Activated CD4-positive, alpha-beta memory T cell treated with anti-CD3 and anti-CD28 coated beads for 36 hours (primary cell): ENCODE measurements at regions of chr14 and their contacts with region 1.

Region 1: DNA sequence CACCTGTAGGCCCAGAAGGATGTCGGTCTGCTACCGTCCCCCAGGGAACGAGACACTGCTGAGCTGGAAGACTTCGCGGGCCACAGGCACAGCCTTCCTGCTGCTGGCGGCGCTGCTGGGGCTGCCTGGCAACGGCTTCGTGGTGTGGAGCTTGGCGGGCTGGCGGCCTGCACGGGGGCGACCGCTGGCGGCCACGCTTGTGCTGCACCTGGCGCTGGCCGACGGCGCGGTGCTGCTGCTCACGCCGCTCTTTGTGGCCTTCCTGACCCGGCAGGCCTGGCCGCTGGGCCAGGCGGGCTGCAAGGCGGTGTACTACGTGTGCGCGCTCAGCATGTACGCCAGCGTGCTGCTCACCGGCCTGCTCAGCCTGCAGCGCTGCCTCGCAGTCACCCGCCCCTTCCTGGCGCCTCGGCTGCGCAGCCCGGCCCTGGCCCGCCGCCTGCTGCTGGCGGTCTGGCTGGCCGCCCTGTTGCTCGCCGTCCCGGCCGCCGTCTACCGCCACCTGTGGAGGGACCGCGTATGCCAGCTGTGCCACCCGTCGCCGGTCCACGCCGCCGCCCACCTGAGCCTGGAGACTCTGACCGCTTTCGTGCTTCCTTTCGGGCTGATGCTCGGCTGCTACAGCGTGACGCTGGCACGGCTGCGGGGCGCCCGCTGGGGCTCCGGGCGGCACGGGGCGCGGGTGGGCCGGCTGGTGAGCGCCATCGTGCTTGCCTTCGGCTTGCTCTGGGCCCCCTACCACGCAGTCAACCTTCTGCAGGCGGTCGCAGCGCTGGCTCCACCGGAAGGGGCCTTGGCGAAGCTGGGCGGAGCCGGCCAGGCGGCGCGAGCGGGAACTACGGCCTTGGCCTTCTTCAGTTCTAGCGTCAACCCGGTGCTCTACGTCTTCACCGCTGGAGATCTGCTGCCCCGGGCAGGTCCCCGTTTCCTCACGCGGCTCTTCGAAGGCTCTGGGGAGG is at the start of gene LTB4R:
- DNase-seq: peak; percentile 81
- H3K4me3 Mint-ChIP-seq: peak within 1 kb of the TSS; percentile 79
- H3K27ac Mint-ChIP-seq: peak within 1 kb of the TSS; percentile 84
- H3K4me1 Mint-ChIP-seq: peaks cover 69% of the 10 kb centered on the region
- H3K27me3 Mint-ChIP-seq: no peaks in the 10 kb centered on the region
- total RNA-seq, gene LTB4R: 15.4 to 16.7 TPM

Region 2: DNA sequence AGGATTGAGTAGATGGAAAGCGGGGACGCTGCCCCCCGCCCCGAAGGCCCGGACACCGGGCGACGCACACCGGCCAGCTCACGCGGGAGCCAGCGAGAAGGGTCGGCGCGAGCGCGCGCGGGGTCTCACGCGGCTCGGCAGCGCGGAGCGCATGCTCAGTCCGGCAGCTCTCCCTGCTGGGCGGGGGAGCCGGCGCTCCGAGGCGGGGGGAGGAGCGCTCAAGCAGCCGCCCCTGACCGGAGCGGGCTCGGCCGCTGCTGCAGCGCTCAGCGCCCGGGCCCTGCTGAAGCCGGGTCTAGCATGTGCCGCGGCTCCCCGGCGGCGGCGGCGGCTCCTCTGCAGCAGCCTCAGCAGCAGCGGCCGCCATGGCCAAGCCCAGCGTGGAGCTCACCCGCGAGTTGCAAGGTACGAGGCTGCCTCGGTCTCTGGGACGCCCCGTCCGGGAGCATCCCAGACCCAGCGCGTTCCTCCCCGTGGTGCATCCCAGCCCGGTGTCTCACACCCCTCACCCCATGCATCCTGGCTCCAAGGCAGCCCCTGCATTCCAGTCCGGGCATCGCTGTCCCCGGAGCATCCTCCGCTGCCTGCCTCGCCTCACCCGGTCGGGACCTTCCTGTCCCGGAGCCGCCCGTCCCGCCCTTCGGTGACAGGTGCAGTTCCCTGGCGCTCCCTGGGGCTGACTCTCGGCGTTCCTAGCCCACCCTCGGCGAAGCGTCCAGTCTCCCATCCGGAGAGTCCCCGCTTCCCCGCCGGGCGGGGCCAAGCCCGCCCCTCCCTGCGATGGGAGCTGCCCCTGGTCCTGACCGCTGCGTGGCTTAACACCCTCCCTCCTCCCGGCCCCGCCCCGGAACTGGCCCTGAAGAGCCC is 258.9 kb before region 1 on chr14 and contains the start of gene CARMIL3:
- CTCF ChIA-PET with region 1: no interaction called
- POLR2A ChIA-PET with region 1: no interaction called
- intact Hi-C with region 1: loop called (anchors 5 kb)
- DNase-seq: peak; percentile 74
- H3K4me3 Mint-ChIP-seq: peak within 1 kb of the TSS; percentile 70
- H3K27ac Mint-ChIP-seq: no peak within 1 kb of the TSS
- H3K4me1 Mint-ChIP-seq: peaks cover 20% of the 10 kb centered on the region
- H3K27me3 Mint-ChIP-seq: peaks cover 4% of the 10 kb centered on the region
- total RNA-seq, gene CARMIL3: 0.75 to 1.00 TPM

Region 3: GRCh38 chr14:24241829-24242443 is 69.0 kb before region 1 on chr14:
- CTCF ChIA-PET with region 1: interaction called, 197 read pairs
- POLR2A ChIA-PET with region 1: interaction called, 17 read pairs
- intact Hi-C with region 1: loop called (anchors 1 kb)
- DNase-seq: peak; percentile 94
- H3K4me3 Mint-ChIP-seq: peak overlapping the region; percentile 84
- H3K27ac Mint-ChIP-seq: peak overlapping the region; percentile 96
- H3K4me1 Mint-ChIP-seq: peaks cover 59% of the 10 kb centered on the region
- H3K27me3 Mint-ChIP-seq: no peaks in the 10 kb centered on the region

Region 4: GRCh38 chr14:24279301-24280186 is 31.4 kb before region 1 on chr14:
- CTCF ChIA-PET with region 1: interaction called, 24 read pairs
- POLR2A ChIA-PET with region 1: no interaction called
- intact Hi-C with region 1: no loop called
- DNase-seq: peak; percentile 77
- H3K4me3 Mint-ChIP-seq: no peak overlapping the region
- H3K27ac Mint-ChIP-seq: peak overlapping the region; percentile 70
- H3K4me1 Mint-ChIP-seq: peaks cover 46% of the 10 kb centered on the region
- H3K27me3 Mint-ChIP-seq: no peaks in the 10 kb centered on the region

Region 5: GRCh38 chr14:24431569-24432258 is 120.8 kb after region 1 on chr14:
- CTCF ChIA-PET with region 1: interaction called, 134 read pairs
- POLR2A ChIA-PET with region 1: interaction called, 6 read pairs
- intact Hi-C with region 1: loop called (anchors 5 kb)
- DNase-seq: peak; percentile 94
- H3K4me3 Mint-ChIP-seq: peak overlapping the region; percentile 91
- H3K27ac Mint-ChIP-seq: peak overlapping the region; percentile 98
- H3K4me1 Mint-ChIP-seq: peaks cover 41% of the 10 kb centered on the region
- H3K27me3 Mint-ChIP-seq: no peaks in the 10 kb centered on the region